ENCODE measurements at regions of chr14 and their contacts with region 1.

Region 1: DNA sequence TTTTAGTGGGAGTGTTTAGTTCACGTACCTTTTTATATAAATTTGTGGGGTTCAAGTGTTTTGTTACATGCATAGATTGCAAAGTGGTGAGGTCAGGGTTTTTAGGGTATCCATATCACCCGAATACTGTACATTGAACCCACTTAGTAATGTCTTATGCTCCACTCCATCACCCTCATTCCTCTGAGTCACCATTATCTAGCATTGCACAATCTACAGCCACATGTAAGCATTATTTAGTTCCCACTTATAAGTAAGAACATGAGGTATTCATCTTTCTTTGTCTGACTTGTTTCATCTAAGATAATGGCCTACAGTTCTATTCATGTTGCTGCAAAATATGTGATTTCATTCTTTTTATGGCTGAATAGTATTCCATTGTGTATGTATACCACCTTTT is 583.7 kb upstream of the LRFN5 start:
- DNase-seq: no peak
- ATAC-seq: no peak
- H3K4me3 Mint-ChIP-seq: no peak overlapping the region
- H3K27ac Mint-ChIP-seq: no peak overlapping the region
- H3K4me1 Mint-ChIP-seq: no peaks in the 10 kb centered on the region
- H3K27me3 Mint-ChIP-seq: no peaks in the 10 kb centered on the region

Region 2: GRCh38 chr14:40878507-40878906 is 144.4 kb before region 1 on chr14:
- CTCF ChIA-PET with region 1: no interaction called
- POLR2A ChIA-PET with region 1: no interaction called
- intact Hi-C with region 1: no loop called
- DNase-seq: no peak
- ATAC-seq: no peak
- H3K4me3 Mint-ChIP-seq: no peak overlapping the region
- H3K27ac Mint-ChIP-seq: no peak overlapping the region
- H3K4me1 Mint-ChIP-seq: no peaks in the 10 kb centered on the region
- H3K27me3 Mint-ChIP-seq: no peaks in the 10 kb centered on the region

Region 3: DNA sequence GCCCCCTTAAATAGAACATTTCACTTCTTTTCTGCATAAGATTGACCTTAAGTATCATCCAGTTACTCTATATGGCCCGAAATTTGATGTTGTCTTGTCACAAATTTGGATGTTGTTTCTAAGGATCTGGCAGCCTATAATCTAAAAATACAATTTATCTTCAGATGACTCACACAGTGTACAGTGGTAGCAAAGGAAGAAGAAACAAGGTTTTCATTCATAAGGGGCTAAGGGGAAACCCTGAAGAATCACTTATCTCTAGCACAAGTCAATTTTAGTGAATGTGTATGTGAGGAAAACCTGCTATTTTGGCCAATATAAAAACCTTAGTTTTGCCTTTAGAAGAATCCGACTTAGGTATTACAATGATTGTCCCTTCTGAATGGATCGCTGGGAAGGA is 22.6 kb before region 1 on chr14:
- CTCF ChIA-PET with region 1: no interaction called
- POLR2A ChIA-PET with region 1: no interaction called
- intact Hi-C with region 1: loop called in 1 of 2 experiments (anchors 2 kb)
- DNase-seq: no peak
- ATAC-seq: no peak
- H3K4me3 Mint-ChIP-seq: no peak overlapping the region
- H3K27ac Mint-ChIP-seq: no peak overlapping the region
- H3K4me1 Mint-ChIP-seq: no peaks in the 10 kb centered on the region
- H3K27me3 Mint-ChIP-seq: no peaks in the 10 kb centered on the region

Measured in activated CD4-positive, alpha-beta T cell treated with anti-CD3 and anti-CD28 coated beads for 36 hours (primary cell).